ENCODE measurements at regions of chr22 and their contacts with region 1.

Region 1: GRCh38 chr22:24805790-24806662 is at the start of gene SGSM1:
- DNase-seq: peak; percentile 74 to 87
- ATAC-seq: peak; percentile 83 to 95 (median 90)
- H3K4me3 ChIP-seq: peak within 1 kb of the TSS; percentile 58 to 74 (median 70)
- H3K27ac ChIP-seq: peak within 1 kb of the TSS in 9 of 10 donors; percentile 52 to 84 (median 78)
- H3K4me1 ChIP-seq: peaks cover 0 to 53% (median 28%) of the 10 kb centered on the region in 9 donors
- H3K27me3 ChIP-seq: peaks cover 0 to 8% (median 0%) of the 10 kb centered on the region in 7 donors
- CTCF ChIP-seq: peak in 1 of 9 donors; percentile 10
- total RNA-seq, gene SGSM1: 5.5 to 14.3 (median 8.3) TPM

Region 2: DNA sequence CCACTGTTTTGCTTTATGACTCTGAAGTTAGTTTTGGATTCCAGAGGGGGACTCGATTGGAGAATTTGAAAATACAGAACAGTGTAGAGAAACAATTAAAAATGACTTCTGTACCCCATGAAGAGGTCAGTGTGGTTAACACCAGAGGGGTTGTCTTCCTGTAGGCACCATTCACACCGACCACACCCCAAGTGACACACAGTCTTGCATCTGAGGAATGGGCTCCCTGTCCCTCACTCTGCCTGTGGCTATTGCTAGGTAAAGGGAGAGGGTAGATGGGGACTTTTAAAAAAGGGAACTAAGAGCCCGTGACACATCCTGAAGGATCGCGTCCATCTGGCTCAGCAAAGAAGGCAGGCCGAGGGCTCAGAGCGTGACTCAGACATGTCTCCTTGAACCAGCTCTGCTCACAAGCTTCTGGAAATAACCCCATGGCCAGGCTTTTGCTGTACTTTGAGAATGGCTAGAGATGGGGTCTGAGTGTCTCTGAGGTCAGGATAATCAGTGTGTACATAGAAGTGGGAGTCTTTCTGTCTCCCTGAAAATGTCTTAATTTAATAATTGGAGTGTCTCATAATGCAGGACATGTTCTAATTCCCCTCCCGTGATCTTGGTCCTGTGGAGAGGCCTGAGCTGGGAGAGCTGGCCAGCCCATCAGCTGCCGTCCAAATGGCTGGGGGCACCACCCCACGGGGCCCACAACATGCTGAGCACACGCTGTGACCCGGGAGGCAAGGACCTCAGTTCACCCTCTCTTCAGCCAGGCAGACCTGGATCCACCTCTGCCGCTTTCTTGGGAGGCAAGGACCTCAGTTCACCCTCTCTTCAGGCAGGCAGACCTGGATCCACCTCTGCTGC is 39.2 kb after region 1 on chr22:
- intact Hi-C with region 1: loop called in 2 of 10 experiments (anchors 5 kb)
- DNase-seq: no peak
- ATAC-seq: peak in 6 of 8 donors; percentile 17 to 64 (median 31)
- H3K4me3 ChIP-seq: no peak overlapping the region
- H3K27ac ChIP-seq: peak overlapping the region in 1 of 10 donors; percentile 14
- H3K4me1 ChIP-seq: peaks cover 0 to 8% (median 0%) of the 10 kb centered on the region in 9 donors
- H3K27me3 ChIP-seq: no peaks in the 10 kb centered on the region
- CTCF ChIP-seq: no peak

Region 3: GRCh38 chr22:24894220-24894975 is 88.4 kb after region 1 on chr22:
- intact Hi-C with region 1: loop called in 1 of 10 experiments (anchors 5 kb)
- DNase-seq: peak; percentile 76 to 85
- ATAC-seq: peak; percentile 85 to 96 (median 95)
- H3K4me3 ChIP-seq: peak overlapping the region in 5 of 10 donors; percentile 7 to 14 (median 11)
- H3K27ac ChIP-seq: peak overlapping the region; percentile 47 to 84 (median 78)
- H3K4me1 ChIP-seq: peaks cover 3 to 23% (median 18%) of the 10 kb centered on the region in 9 donors
- H3K27me3 ChIP-seq: no peaks in the 10 kb centered on the region
- CTCF ChIP-seq: no peak

Region 4: GRCh38 chr22:24938741-24939341 is 132.8 kb after region 1 on chr22:
- intact Hi-C with region 1: no loop called
- DNase-seq: peak in 1 of 2 donors; percentile 20
- ATAC-seq: peak in 6 of 8 donors; percentile 11 to 57 (median 43)
- H3K4me3 ChIP-seq: no peak overlapping the region
- H3K27ac ChIP-seq: no peak overlapping the region
- H3K4me1 ChIP-seq: no peaks in the 10 kb centered on the region
- H3K27me3 ChIP-seq: peaks cover 0 to 4% (median 0%) of the 10 kb centered on the region in 7 donors
- CTCF ChIP-seq: peak; percentile 42 to 82 (median 77)